ENCODE measurements at regions of chr3 and their contacts with region 1.

Region 1: DNA sequence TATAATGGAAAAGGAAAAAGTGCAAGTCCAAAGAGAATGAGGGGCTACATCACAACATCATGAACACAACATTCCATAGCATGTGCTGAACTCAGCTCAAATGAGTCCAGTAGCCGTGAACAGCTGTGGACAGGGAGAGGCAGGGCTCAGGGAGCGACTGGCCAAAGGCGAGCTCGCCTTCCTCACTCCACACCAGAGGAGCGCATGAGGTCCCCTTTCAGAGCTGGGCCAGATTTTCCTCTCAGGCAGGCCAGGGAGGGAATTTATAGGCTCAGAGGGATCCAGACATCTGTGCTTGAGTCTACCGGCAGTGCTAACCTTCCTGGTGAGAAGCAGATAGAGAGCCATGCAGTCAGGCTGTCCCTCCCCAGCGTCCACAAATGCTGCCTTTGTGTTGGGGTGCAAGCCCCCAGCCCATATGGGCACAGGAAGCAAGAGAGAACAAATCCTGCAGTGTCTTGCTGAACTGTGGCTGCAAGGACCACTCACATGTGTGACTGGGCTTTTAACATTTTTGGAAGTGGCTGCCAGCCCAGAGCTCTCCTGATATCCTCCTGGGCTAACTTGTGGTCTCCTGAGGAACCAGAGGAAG is 32.5 kb downstream of the ARHGEF3 start:
- DNase-seq: no peak
- ATAC-seq: no peak
- H3K4me3 Mint-ChIP-seq: no peak overlapping the region
- H3K27ac Mint-ChIP-seq: no peak overlapping the region
- H3K4me1 Mint-ChIP-seq: peaks cover 5% of the 10 kb centered on the region
- H3K27me3 Mint-ChIP-seq: no peaks in the 10 kb centered on the region
- CTCF ChIP-seq: no peak

Region 2: DNA sequence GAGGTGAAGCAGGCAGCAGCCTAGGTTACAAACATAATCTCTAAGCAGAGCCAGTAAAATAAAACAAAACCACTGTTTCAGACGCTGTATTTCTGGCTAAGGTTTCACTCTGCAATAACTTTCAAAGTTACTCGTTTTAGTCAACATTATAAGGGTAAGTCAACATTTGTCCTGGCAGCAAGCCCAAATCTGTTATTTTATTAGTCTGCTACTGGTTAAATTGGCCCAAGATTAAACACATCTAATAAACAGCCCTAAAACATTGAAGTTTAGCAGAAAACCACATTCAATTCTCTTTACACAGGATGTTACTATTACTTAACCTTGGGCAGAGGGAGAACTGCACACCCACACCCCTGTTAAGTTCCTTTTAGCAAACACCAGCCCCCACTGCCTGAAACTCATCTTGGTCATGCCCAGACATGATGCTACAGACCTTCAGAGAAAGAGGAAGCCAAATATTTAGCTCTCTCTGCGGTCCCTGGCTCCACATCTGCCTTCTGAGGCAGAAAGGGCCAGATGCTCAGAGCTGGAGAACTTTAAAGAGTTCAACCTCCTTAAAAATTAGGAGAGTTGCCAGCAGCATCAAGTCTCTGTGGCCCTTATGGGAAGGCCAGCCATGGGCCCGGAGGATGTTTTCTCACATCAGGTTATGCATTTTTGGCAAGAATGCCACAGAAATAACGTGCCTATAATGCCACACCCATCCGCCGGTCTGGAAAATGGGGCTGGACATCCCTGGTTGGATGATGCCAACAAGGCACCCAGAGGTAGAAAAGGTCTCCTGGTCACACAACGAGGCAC is 14.6 kb after region 1 on chr3:
- CTCF ChIA-PET with region 1: no interaction called
- POLR2A ChIA-PET with region 1: interaction called, 5 read pairs
- intact Hi-C with region 1: loop called (anchors 2 kb)
- DNase-seq: peak; percentile 40
- ATAC-seq: peak; percentile 99
- H3K4me3 Mint-ChIP-seq: peak overlapping the region; percentile 32
- H3K27ac Mint-ChIP-seq: peak overlapping the region; percentile 92
- H3K4me1 Mint-ChIP-seq: peaks cover 88% of the 10 kb centered on the region
- H3K27me3 Mint-ChIP-seq: no peaks in the 10 kb centered on the region
- CTCF ChIP-seq: no peak

Region 3: DNA sequence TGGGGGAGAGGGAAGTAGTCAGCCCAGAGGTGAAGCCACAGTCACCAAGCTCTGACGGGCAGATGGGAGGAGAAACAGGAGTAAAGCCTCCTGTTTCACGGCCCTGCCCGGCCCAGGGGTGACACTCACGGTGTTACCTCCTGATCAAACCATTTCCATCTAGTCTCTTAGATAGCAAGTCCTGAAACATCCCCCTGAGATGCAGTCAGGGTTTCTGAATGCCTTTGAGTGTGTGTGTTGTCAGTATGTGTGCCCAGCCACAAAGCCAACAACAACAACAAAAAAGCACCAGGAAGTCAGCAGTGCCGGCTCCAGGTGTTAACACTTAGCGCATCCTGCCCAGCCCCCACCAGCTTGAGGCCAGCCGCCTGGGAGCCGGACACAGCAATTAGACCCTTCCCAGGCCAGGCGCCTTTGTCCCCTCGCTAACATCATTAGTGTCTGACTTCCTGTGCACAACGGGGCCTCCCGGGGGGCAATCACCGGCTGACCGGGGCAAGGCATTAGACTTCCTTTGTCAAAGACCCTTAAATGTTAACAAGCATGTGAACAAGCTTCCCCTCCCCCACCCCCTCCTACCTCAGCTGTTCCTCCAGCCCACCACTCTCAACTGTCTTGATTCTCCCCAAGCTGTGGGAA is 361.5 kb after region 1 on chr3:
- CTCF ChIA-PET with region 1: no interaction called
- POLR2A ChIA-PET with region 1: no interaction called
- intact Hi-C with region 1: no loop called
- DNase-seq: no peak
- ATAC-seq: no peak
- H3K4me3 Mint-ChIP-seq: no peak overlapping the region
- H3K27ac Mint-ChIP-seq: no peak overlapping the region
- H3K4me1 Mint-ChIP-seq: no peaks in the 10 kb centered on the region
- H3K27me3 Mint-ChIP-seq: peaks cover 14% of the 10 kb centered on the region
- CTCF ChIP-seq: no peak